ENCODE measurements at regions of chr3 and their contacts with region 1.

Region 1: GRCh38 chr3:42581709-42582473 is at the start of gene SEC22C:
- DNase-seq: peak; percentile 97
- H3K4me3 Mint-ChIP-seq: peak within 1 kb of the TSS; percentile 90
- H3K27ac Mint-ChIP-seq: peak within 1 kb of the TSS; percentile 93
- H3K4me1 Mint-ChIP-seq: peaks cover 39% of the 10 kb centered on the region
- H3K27me3 Mint-ChIP-seq: no peaks in the 10 kb centered on the region
- total RNA-seq, gene SEC22C: 41.2 to 45.9 TPM

Region 2: DNA sequence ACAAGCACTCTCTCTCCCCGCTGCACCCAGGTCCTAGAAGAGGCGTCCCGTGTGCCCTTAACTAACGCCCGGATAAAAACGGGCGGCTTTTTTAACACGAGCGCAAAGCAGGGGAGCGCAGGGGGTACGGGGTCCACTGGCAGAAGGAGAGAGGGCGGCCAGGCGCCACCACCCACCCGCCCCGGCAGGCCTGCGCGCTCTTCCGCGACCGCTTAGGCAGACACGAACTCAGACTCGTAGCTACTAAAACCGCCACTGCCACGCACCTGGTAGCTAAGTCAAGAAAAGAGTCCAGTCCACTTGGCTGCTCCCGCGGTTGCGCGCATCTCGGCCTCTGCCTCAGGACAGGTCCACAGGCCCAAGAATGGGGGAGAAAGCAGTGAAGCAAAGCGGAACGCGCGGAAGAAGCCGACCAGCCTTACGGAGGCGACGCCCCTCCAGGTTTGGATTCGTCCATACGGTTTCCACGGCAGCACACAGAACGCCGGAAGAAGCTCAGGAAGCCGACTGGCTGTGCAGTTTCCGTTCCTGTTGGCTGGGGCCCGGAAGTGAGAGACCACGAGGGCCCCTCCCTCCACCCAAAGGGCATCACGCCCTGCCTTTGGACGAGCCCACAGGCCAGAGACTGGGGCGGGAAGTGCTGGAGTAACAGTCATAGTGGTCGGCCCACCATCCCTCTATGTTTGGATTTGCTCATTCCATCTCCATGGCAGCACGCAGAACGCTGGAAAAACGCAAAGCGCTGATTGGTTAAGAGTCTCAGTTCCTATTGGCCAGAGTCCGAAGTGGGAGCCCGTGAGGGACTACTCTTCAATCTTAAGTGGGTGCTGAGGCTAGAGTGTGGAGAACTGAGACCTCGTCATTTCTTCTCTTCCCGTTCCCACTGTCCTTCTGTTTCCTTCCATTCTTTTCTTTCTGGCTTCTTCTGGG is 619.9 kb before region 1 on chr3 and contains the start of gene ULK4:
- CTCF ChIA-PET with region 1: no interaction called
- intact Hi-C with region 1: loop called (anchors 5 kb)
- DNase-seq: peak; percentile 97
- H3K4me3 Mint-ChIP-seq: peak within 1 kb of the TSS; percentile 99
- H3K27ac Mint-ChIP-seq: peak within 1 kb of the TSS; percentile 87
- H3K4me1 Mint-ChIP-seq: peaks cover 13% of the 10 kb centered on the region
- H3K27me3 Mint-ChIP-seq: no peaks in the 10 kb centered on the region
- total RNA-seq, gene ULK4: 8.5 to 9.1 TPM

Region 3: GRCh38 chr3:42600111-42600988 is 18.5 kb after region 1 on chr3 and contains the start of gene NKTR:
- CTCF ChIA-PET with region 1: interaction called, 15 read pairs
- intact Hi-C with region 1: loop called (anchors 1 kb)
- DNase-seq: peak; percentile 99
- H3K4me3 Mint-ChIP-seq: peak within 1 kb of the TSS; percentile 96
- H3K27ac Mint-ChIP-seq: peak within 1 kb of the TSS; percentile 99
- H3K4me1 Mint-ChIP-seq: peaks cover 27% of the 10 kb centered on the region
- H3K27me3 Mint-ChIP-seq: no peaks in the 10 kb centered on the region
- total RNA-seq, gene NKTR: 62.1 to 65.9 TPM

Region 4: DNA sequence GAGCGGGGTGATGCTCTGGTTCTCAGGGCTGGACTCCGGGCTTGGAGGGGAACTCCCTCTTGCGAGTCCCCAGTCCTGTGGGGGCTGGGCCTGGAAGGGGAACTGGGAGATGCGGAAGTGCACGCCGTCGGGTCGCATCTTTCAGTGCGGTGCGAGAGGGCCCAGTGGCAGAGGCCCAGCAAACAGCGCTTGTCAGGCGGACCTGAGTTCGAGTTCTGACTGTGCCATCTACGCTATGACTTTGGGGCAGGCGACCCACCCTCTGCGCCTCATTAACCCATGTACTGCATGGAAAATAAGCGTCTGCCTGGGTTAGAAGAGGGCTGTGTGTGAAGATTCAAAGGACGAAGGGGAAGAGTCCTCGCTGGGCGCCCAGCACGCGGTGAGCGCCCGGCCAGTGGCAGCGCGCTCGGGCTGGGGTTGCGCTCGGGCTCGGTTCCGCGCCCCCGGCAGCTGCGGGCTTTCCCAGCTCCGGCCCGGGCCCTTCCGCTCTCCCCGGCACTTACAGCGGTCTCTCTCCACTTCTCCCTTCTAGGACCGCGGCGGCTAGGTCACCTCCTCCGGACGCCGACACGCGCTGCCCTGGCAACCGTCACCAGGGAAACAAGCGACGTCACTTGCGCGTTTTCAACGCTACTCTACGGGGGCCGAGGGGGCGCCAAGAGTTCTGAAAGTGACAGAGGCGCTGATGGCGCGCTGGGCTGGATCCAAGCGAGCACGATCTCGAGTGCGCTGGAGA is 190.9 kb after region 1 on chr3 and contains the start of gene CCDC13:
- CTCF ChIA-PET with region 1: no interaction called
- intact Hi-C with region 1: loop called (anchors 1 kb)
- DNase-seq: peak; percentile 96
- H3K4me3 Mint-ChIP-seq: peak within 1 kb of the TSS; percentile 78
- H3K27ac Mint-ChIP-seq: peak within 1 kb of the TSS; percentile 4
- H3K4me1 Mint-ChIP-seq: peaks cover 10% of the 10 kb centered on the region
- H3K27me3 Mint-ChIP-seq: no peaks in the 10 kb centered on the region
- total RNA-seq, gene CCDC13: 0.31 TPM in 1 of 2 experiments, not detected in the other

Region 5: GRCh38 chr3:42880601-42881451 is 298.9 kb after region 1 on chr3:
- CTCF ChIA-PET with region 1: no interaction called
- intact Hi-C with region 1: loop called (anchors 1 kb)
- DNase-seq: peak; percentile 91
- H3K4me3 Mint-ChIP-seq: peak overlapping the region; percentile 75
- H3K27ac Mint-ChIP-seq: no peak overlapping the region
- H3K4me1 Mint-ChIP-seq: peaks cover 10% of the 10 kb centered on the region
- H3K27me3 Mint-ChIP-seq: no peaks in the 10 kb centered on the region